A549 (cell line): ENCODE measurements at regions of chr3 and their contacts with region 1.

Region 1: DNA sequence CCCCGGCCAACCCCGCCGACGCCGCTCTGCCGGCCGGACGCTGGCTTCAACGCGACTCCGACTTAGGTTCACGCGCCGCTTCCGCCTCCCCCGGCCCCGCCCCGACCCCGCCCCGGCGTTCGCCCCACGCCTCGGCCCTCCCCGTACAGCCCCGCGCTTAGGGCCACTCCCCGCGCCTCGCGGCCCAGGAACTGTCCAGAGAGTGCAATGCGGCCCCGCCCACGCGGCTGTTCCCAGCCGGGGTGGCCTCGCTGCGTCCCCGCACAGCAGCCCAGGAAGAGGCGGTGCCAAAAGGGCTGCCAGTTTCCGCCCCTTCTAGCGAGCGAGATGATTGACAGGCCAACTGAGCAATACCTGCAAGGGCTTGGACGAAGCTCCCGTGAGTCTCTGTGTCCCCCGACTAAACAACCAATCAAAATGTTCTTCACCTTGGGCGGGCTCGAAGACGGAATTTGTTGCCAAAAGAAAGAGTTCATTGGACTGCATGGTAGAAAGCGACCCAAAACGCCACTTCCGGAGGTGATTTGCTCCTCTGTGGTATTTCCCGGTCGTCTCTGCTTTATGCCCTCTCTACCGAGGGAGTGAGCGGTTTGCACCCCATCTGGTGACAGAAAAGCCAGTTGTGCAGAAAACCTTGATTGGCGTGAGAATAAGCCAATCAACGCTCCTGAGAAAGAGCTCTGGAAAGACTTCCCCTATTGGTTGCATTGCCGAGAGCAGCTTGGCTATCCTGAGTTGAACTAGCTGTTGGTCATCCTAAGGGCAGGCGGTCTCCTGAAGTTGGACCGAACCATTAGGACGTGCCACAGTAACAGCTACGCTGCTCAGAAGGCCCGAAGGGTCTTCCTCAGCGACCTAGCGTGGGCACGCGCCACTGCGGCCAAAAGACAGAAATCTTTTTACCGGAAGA is at the start of gene UBP1:
- DNase-seq: peak; percentile 99 to 100
- ATAC-seq: peak; percentile 82 to 93
- H3K4me3 ChIP-seq: peak within 1 kb of the TSS; percentile 79
- H3K27ac ChIP-seq: peak within 1 kb of the TSS; percentile 96 to 98
- H3K4me1 ChIP-seq: peaks cover 31% of the 10 kb centered on the region
- CTCF ChIP-seq: no peak
- EP300 ChIP-seq: no peak
- POLR2A ChIP-seq: peak; percentile 95
- RAD21 ChIP-seq: no peak
- polyA plus RNA-seq, gene UBP1: 92.5 and 92.9 TPM in 2 replicates

Region 2: GRCh38 chr3:33256249-33256648 is 184.3 kb before region 1 on chr3:
- CTCF ChIA-PET with region 1: no interaction called
- POLR2A ChIA-PET with region 1: no interaction called
- DNase-seq: no peak
- ATAC-seq: no peak
- H3K4me3 ChIP-seq: no peak overlapping the region
- H3K27ac ChIP-seq: no peak overlapping the region
- H3K4me1 ChIP-seq: no peaks in the 10 kb centered on the region
- CTCF ChIP-seq: no peak
- EP300 ChIP-seq: no peak
- POLR2A ChIP-seq: no peak
- RAD21 ChIP-seq: no peak

Region 3: GRCh38 chr3:33420966-33421365 is 19.6 kb before region 1 on chr3:
- CTCF ChIA-PET with region 1: interaction called, 13 read pairs
- POLR2A ChIA-PET with region 1: interaction called, 3 read pairs
- DNase-seq: peak in 1 of 2 experiments; percentile 13
- ATAC-seq: peak; percentile 59 to 62; a peak in 3 of 6 replicates
- H3K4me3 ChIP-seq: no peak overlapping the region
- H3K27ac ChIP-seq: no peak overlapping the region
- H3K4me1 ChIP-seq: peaks cover 12% of the 10 kb centered on the region; the same call in 2 of the 3 replicates
- CTCF ChIP-seq: no peak
- EP300 ChIP-seq: no peak
- POLR2A ChIP-seq: no peak
- RAD21 ChIP-seq: no peak

Region 4: DNA sequence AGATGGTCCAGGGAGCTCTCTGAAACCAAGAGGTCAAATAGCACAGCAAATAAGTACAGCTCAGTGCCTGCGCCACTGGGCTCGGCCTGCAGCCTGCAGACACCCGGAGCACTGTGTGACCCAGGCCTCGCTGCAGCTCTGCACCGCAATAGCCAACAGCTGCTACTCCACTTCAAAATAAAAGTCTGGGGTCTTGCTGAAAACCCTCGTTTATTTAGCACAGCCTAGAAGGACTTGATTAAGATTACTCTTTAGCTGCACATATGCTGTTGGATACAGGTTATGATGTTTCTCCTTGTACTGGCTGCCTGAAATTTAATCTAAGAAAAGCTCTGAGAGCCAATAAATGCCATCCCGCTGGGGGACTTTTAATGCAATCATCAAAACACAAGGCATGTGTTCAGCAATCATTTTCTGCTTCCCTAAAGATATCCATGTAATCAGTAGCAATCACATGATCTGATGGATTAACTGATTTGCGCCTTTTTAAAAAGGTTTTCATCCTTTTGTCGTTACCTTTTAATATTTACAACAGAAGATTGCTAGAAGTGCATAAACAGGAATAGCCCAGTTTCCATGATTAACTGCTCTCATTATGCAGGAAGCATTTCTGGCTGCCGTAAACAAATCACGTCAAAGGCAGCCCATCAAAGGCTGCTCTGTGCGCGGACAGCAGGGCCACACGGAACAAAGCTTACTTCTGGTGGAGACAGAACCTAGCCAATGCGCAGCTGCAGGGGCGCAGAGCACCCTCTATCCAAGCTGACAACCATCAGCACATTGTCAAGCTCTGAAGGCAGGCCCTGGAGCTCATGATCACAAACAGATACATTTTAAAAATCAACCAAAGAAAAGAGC is 218.6 kb after region 1 on chr3:
- CTCF ChIA-PET with region 1: no interaction called
- POLR2A ChIA-PET with region 1: interaction called, 15 read pairs
- DNase-seq: peak; percentile 50 to 71
- ATAC-seq: peak; percentile 96 to 97
- H3K4me3 ChIP-seq: peak overlapping the region; percentile 29
- H3K27ac ChIP-seq: peak overlapping the region; percentile 45 to 73
- H3K4me1 ChIP-seq: peaks cover 20% of the 10 kb centered on the region
- CTCF ChIP-seq: 0 out of 3 replicates have a peak, but pooled peaks have one; percentile 1
- EP300 ChIP-seq: no peak
- POLR2A ChIP-seq: no peak
- RAD21 ChIP-seq: no peak

Region 5: DNA sequence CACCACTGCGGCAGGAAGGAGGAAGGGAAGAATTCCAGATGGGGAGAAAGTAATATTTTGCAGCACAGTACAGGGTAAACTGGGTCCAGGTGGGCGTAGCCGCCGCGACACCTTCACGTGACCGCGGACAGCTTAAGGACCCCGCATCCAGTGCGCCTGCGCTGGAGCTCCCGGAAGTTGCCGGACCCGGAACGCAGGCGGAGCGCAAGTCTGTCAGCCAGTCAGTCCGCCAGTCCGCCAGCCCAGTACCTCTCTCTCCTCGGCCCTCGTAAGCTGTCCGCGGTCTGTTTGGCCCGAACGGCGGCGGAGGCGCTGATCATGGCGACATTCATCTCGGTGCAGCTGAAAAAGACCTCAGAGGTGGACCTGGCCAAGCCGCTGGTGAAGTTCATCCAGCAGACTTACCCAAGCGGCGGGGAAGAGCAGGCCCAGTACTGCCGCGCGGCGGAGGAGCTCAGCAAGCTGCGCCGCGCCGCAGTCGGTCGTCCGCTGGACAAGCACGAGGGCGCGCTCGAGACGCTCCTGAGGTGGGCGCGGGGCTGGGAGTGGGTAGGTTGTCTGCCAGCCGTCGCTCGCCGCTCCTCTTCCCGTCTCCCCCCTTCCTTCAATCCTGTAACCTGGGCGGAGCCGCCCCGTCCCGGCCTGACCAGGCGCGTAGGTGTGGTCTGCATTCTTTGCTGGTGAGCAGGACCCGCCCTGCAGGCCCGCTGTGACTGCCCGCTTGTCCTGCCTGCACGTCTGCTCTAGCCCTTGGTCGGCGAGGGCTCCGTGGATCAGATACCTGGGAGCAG is 358.0 kb after region 1 on chr3 and contains the start of gene PDCD6IP:
- CTCF ChIA-PET with region 1: no interaction called
- POLR2A ChIA-PET with region 1: interaction called, 13 read pairs
- DNase-seq: peak; percentile 95
- ATAC-seq: peak; percentile 96 to 98
- H3K4me3 ChIP-seq: peak within 1 kb of the TSS; percentile 88
- H3K27ac ChIP-seq: peak within 1 kb of the TSS; percentile 97
- H3K4me1 ChIP-seq: peaks cover 25% of the 10 kb centered on the region; the same call in 2 of the 3 replicates
- CTCF ChIP-seq: no peak
- EP300 ChIP-seq: no peak
- POLR2A ChIP-seq: peak; percentile 87
- RAD21 ChIP-seq: no peak
- polyA plus RNA-seq, gene PDCD6IP: 180 and 221 TPM in 2 replicates